ENCODE measurements at regions of chr19 and their contacts with region 1.

Region 1: DNA sequence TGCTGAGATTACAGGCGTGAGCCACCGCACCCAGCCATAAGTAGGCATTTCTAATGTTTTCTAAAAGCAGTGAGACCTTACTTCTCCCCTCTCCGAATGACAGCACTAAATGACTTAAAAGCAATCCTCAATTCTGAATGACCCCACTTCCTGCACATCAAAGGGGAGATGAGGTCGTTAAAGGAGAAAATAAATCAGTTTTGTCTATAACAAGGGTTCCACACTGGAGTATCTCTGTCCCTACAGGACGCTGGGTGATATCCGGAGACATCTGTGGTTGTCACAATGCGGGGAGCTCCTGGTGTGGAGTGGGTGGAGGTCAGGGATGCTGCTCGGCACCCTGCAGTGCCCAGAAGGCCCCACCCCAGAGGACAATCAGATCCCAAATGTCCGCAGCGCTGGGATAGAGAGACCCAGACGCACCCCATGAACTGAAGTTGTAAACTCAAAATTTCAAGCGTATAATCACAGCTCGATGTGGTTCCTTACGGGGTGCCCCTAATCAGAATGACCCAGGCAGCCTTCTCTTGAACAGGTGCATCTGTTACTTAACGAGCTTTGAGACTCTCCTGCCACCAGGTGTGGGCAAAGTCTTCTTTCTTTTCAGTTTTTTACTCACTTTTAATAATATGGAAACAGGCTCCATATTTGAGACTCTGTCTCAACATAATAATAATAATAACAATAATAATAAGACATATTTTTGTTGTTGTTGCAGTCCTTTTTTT is 2.9 kb downstream of the GNG7 start:
- DNase-seq: no peak
- H3K4me3 ChIP-seq: no peak overlapping the region
- CTCF ChIP-seq: no peak

Region 2: GRCh38 chr19:2640563-2641331 is 58.8 kb before region 1 on chr19:
- in situ Hi-C with region 1: loop called (anchors 5 kb)
- DNase-seq: no peak
- H3K4me3 ChIP-seq: no peak overlapping the region
- CTCF ChIP-seq: no peak

Region 3: GRCh38 chr19:2759362-2759761 is 59.8 kb after region 1 on chr19:
- in situ Hi-C with region 1: loop called (anchors 5 kb)
- DNase-seq: no peak
- H3K4me3 ChIP-seq: no peak overlapping the region
- CTCF ChIP-seq: no peak

Measured in astrocyte of the cerebellum (primary cell).